ENCODE measurements at regions of chr6 and their contacts with region 1.

Region 1: DNA sequence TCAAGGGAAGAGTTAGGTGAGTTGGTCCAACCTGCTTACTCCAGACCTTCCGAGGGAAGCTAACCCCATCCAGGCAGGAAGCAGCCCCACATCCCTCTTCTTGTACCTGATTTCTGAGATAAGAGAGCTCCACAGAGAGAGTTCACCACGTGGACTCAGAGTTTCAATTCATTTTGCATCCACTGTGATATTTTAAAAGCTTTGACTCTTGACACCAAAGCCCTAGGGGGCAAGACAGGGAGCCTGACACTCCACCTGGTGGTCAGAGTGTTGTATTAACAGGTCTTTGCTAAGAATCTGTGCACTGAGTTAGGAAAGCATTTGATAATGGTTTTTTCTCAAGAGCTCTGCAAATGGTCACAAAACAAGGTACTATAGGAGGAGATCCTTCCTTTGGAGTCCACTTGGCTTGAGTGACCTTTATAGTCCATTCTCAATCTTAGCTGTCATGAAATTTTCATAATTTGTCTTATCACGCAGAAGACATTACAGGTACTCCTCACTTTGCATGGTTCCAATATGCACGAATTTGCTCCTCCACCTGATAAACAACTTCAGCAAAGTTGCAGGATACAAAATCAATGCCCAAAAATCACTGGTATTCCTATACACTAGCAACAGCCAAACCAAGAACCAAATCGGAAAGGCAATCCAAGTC is 56.2 kb upstream of the RIPOR2 start:
- DNase-seq: peak; percentile 41 to 64
- H3K4me3 ChIP-seq: no peak overlapping the region
- H3K4me3 Mint-ChIP-seq: no peak overlapping the region
- H3K27ac Mint-ChIP-seq: no peak overlapping the region
- H3K4me1 ChIP-seq: peaks cover 6% of the 10 kb centered on the region; the same call in 1 of the 2 replicates
- H3K4me1 Mint-ChIP-seq: peaks cover 17% of the 10 kb centered on the region
- H3K27me3 ChIP-seq: no peaks in the 10 kb centered on the region
- H3K27me3 Mint-ChIP-seq: no peaks in the 10 kb centered on the region
- CTCF ChIP-seq: peak; percentile 63 to 68

Region 2: DNA sequence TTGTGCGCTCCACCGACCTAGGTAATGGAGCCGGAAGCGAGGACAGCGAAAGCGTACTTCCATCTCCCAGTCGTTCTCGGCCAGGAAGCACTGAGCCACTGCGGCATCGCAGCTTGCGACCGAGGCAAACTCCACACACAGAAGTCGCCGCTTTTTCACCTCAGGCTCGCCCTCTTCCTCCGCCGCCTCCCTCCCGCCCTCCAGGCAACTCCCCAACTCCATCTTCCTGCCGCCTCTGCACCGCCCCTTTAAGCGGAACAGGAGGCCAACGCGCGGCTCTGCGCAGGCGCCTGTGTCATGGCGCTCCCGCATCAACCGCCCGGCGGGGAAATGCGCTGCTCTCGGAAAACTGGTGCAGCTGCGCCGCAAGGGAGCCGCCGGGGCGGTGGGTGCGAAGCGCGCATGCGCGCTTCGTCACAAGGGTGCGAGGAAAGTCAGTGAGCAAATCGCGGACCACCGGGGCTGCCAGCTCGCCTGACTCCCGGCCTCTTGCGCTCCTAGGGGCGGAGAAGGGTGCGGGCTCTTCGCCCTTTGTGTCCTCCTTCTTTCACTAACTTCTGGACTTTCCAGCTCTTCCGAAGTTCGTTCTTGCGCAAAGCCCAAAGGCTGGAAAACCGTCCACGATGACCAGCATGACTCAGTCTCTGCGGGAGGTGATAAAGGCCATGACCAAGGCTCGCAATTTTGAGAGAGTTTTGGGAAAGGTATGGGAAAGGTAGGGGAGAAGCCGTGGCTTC is 325.1 kb before region 1 on chr6 and contains the starts of genes ACOT13 and TDP2:
- CTCF ChIA-PET with region 1: no interaction called
- POLR2A ChIA-PET with region 1: no interaction called
- intact Hi-C with region 1: no loop called
- DNase-seq: peak; percentile 94 to 96
- H3K4me3 ChIP-seq: peak within 1 kb of the TSS; percentile 90
- H3K4me3 Mint-ChIP-seq: peak within 1 kb of the TSS; percentile 85
- H3K27ac Mint-ChIP-seq: peak within 1 kb of the TSS; percentile 94
- H3K4me1 ChIP-seq: peaks cover 29% of the 10 kb centered on the region
- H3K4me1 Mint-ChIP-seq: peaks cover 32% of the 10 kb centered on the region
- H3K27me3 ChIP-seq: no peaks in the 10 kb centered on the region
- H3K27me3 Mint-ChIP-seq: no peaks in the 10 kb centered on the region
- CTCF ChIP-seq: peak; percentile 52 to 62
- total RNA-seq, gene ACOT13: 55.6 and 63.1 TPM in 2 replicates
- total RNA-seq, gene TDP2: 46.7 and 47.2 TPM in 2 replicates

Region 3: DNA sequence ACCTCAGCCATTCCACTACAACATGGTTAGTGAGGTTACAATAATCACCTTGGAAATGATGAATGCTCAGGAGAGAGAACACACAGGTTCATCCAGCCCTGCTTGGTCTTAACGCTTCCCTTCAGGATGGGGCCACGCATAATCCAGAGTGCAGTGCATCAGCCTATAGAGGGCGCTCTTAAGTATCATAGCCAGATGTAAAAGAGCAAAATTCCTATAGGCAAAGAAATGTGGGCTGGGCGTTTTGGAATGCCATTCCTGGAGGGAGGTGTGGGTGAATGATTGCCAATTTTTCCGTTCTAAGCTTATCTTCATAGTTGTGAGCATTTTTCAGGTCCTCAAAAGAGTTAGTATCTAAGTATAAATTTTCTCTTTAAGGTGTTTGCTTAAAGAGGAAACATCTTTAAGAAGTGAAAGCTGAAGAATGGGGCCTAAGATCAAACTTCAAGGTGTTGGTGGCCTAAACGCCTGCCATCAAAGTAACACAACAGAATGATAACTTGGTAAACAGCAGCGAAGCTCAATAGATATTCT is 58.0 kb before region 1 on chr6:
- CTCF ChIA-PET with region 1: interaction called, 4 read pairs
- POLR2A ChIA-PET with region 1: no interaction called
- intact Hi-C with region 1: loop called (anchors 2 kb)
- DNase-seq: peak; percentile 43 to 44
- H3K4me3 ChIP-seq: no peak overlapping the region
- H3K4me3 Mint-ChIP-seq: no peak overlapping the region
- H3K27ac Mint-ChIP-seq: no peak overlapping the region
- H3K4me1 ChIP-seq: peaks cover 14% of the 10 kb centered on the region
- H3K4me1 Mint-ChIP-seq: no peaks in the 10 kb centered on the region
- H3K27me3 ChIP-seq: no peaks in the 10 kb centered on the region
- H3K27me3 Mint-ChIP-seq: no peaks in the 10 kb centered on the region
- CTCF ChIP-seq: peak; percentile 41 to 49

Region 4: GRCh38 chr6:24974182-24975171 is 17.5 kb before region 1 on chr6:
- CTCF ChIA-PET with region 1: no interaction called
- POLR2A ChIA-PET with region 1: no interaction called
- intact Hi-C with region 1: no loop called
- DNase-seq: no peak
- H3K4me3 ChIP-seq: no peak overlapping the region
- H3K4me3 Mint-ChIP-seq: no peak overlapping the region
- H3K27ac Mint-ChIP-seq: no peak overlapping the region
- H3K4me1 ChIP-seq: no peaks in the 10 kb centered on the region
- H3K4me1 Mint-ChIP-seq: peaks cover 6% of the 10 kb centered on the region
- H3K27me3 ChIP-seq: no peaks in the 10 kb centered on the region
- H3K27me3 Mint-ChIP-seq: no peaks in the 10 kb centered on the region
- CTCF ChIP-seq: no peak